CD4-positive, alpha-beta memory T cell (primary cell): ENCODE measurements at regions of chr2 and their contacts with region 1.

Region 1: DNA sequence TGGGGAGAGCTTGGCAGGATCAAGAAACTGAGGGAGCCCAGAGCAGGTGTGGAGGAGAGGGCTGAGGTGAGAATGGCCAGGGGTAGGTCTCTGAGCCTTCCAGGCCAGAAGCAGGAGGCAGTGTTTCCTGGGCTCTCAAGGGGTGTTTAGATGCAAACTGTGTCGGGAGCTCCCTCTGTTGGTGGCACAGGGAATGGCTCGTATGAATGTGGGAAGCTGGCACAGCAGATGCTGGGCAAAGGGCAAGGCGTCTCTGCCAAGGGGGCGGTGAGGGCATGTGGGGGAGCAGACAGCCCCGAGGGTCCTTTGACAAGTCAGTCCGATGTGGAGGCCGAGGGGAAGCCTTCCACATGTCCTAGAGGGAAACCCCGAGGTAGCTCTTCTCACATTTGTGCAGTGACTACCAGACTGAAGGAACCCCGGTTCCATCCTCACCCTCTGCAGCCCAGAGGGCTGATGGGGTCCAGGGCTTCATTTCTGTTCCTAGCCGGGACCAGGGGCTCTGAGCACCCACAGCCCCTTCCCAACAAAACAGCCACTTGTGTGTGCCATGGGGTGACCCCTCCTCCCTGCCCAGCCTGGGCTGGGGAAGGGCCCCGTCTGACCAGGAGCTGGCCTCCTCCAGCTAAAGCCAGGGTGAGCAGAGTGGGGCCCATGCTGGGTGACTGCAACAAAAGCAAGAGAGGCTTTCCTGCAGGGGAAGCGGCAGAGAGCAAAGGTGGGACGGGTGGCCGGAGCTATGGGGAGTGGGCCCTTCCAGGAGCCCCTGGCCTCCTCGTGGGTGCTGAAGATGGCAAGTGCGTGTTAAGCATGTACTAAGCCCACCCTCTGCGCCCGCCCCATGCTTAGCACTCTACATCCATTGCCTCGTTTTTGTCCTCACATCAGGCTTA is 103.4 kb downstream of the SEPTIN10 start:
- DNase-seq: peak; percentile 65 to 71 (median 68)
- H3K4me3 ChIP-seq: no peak overlapping the region
- H3K4me3 Mint-ChIP-seq: no peak overlapping the region
- H3K27ac ChIP-seq: no peak overlapping the region
- H3K27ac Mint-ChIP-seq: peak overlapping the region in 1 of 7 donors; percentile 44
- H3K4me1 ChIP-seq: no peaks in the 10 kb centered on the region
- H3K4me1 Mint-ChIP-seq: peaks cover 0 to 11% (median 5%) of the 10 kb centered on the region in 4 donors
- H3K27me3 ChIP-seq: no peaks in the 10 kb centered on the region
- H3K27me3 Mint-ChIP-seq: no peaks in the 10 kb centered on the region

Region 2: DNA sequence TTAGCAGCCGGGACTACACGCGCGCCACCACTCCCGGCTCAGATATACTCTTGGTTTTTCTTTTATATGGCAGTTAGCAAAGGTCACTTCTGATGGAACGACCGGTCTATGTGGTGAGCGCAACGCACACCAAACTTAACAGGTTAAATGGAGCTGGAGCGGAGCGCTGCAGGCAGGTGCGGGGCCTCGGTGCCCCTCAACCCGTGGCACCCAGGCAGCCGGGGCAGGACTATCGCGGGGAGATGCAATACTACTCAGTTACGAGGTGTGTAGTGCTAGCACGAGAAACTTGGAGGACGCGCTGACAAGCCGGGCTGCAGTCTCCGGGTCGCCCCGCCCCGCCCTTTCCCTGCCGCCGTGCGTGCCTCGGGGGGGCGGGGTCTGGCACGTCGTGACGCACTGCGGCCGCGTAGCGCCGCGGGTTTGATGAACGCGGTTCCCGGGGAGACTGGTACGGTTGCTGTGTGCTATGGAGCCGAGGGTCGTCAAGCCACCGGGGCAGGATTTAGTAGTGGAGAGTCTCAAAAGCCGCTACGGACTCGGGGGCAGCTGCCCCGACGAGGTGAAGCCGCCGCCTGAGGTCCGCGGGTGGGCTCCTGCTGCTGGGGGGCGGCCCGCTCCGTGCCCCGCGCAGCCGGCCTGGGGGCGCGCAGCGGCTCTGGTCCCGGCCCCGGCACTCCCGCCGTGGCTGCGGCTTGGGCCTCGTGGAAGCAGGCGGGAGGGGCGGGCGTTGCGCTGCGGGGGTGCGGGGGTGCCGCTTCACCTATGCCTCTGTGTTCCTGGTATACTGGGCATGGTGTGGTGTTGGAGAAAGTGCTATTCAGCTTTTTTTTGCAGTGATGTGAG is 723.8 kb before region 1 on chr2 and contains the start of gene CCDC138:
- CTCF ChIA-PET with region 1: no interaction called
- POLR2A ChIA-PET with region 1: no interaction called
- intact Hi-C with region 1: loop called (anchors 2 kb)
- DNase-seq: peak; percentile 89 to 91 (median 90)
- H3K4me3 ChIP-seq: peak within 1 kb of the TSS; percentile 37 to 78
- H3K4me3 Mint-ChIP-seq: peak within 1 kb of the TSS; percentile 93 to 100 (median 99)
- H3K27ac ChIP-seq: peak within 1 kb of the TSS; percentile 78
- H3K27ac Mint-ChIP-seq: peak within 1 kb of the TSS; percentile 80 to 99 (median 98)
- H3K4me1 ChIP-seq: peaks cover 15% of the 10 kb centered on the region
- H3K4me1 Mint-ChIP-seq: peaks cover 9 to 20% (median 11%) of the 10 kb centered on the region in 4 donors
- H3K27me3 ChIP-seq: no peaks in the 10 kb centered on the region
- H3K27me3 Mint-ChIP-seq: no peaks in the 10 kb centered on the region
- total RNA-seq, gene CCDC138: 4.2 to 4.9 TPM

Region 3: GRCh38 chr2:108927936-108928659 is 582.3 kb before region 1 on chr2:
- CTCF ChIA-PET with region 1: interaction called, 42 read pairs
- POLR2A ChIA-PET with region 1: no interaction called
- intact Hi-C with region 1: loop called (anchors 1 kb)
- DNase-seq: peak in 4 of 5 donors; percentile 41 to 52 (median 46)
- H3K4me3 ChIP-seq: no peak overlapping the region
- H3K4me3 Mint-ChIP-seq: no peak overlapping the region
- H3K27ac ChIP-seq: no peak overlapping the region
- H3K27ac Mint-ChIP-seq: peak overlapping the region in 1 of 7 donors; percentile 2
- H3K4me1 ChIP-seq: peaks cover 7% of the 10 kb centered on the region
- H3K4me1 Mint-ChIP-seq: peaks cover 4 to 14% (median 7%) of the 10 kb centered on the region in 4 donors
- H3K27me3 ChIP-seq: no peaks in the 10 kb centered on the region
- H3K27me3 Mint-ChIP-seq: no peaks in the 10 kb centered on the region

Region 4: DNA sequence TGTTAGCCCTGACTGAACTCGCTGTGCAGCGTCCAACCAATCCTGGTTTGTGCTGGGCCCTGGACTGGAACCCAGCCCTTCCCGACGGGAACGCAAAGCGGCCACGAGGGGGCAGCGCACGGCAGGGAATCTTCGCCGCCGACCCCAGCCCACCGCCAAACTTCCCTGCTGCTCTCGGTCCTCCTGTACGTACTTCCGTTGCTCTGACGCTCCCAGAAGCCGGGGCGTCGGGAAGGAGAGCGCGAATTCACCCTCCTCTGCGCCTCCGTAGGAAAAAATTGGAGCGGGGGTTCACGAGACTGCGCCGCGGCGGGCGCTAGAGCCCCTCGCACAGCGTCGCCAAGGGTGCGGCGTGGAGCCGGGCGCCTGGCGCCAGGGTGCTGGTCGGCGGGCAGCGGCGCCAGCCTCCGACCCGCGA is 382.3 kb before region 1 on chr2:
- CTCF ChIA-PET with region 1: interaction called, 38 read pairs
- POLR2A ChIA-PET with region 1: interaction called, 8 read pairs
- intact Hi-C with region 1: no loop called
- DNase-seq: peak; percentile 32 to 56 (median 54)
- H3K4me3 ChIP-seq: peak overlapping the region; percentile 11 to 63
- H3K4me3 Mint-ChIP-seq: peak overlapping the region; percentile 71 to 85 (median 80)
- H3K27ac ChIP-seq: no peak overlapping the region
- H3K27ac Mint-ChIP-seq: peak overlapping the region in 1 of 7 donors; percentile 12
- H3K4me1 ChIP-seq: peaks cover 15% of the 10 kb centered on the region
- H3K4me1 Mint-ChIP-seq: peaks cover 6 to 14% (median 10%) of the 10 kb centered on the region in 4 donors
- H3K27me3 ChIP-seq: peaks cover 5% of the 10 kb centered on the region
- H3K27me3 Mint-ChIP-seq: peaks cover 20 to 39% of the 10 kb centered on the region in 2 donors

Region 5: DNA sequence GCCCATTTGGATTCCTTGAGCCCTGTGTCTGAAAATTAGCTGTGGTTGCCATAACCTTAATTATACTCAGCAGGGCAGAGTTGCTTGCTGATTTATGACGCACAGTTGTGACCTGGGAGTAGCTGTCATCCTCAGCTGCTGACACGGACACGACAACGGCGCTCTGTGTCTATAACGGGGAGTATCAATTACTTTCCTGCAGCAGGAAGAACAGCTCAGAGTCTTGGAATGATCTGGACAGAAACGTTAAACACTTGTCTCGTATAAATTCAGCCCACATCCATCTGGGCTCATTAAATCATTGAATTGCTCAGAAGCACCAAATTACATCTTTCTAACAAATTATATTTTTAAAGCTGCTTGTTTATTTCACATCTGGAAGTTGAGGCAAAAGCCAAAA is 12.9 kb before region 1 on chr2:
- CTCF ChIA-PET with region 1: interaction called, 10 read pairs
- POLR2A ChIA-PET with region 1: interaction called, 3 read pairs
- intact Hi-C with region 1: no loop called
- DNase-seq: no peak
- H3K4me3 ChIP-seq: no peak overlapping the region
- H3K4me3 Mint-ChIP-seq: no peak overlapping the region
- H3K27ac ChIP-seq: no peak overlapping the region
- H3K27ac Mint-ChIP-seq: no peak overlapping the region
- H3K4me1 ChIP-seq: no peaks in the 10 kb centered on the region
- H3K4me1 Mint-ChIP-seq: no peaks in the 10 kb centered on the region
- H3K27me3 ChIP-seq: no peaks in the 10 kb centered on the region
- H3K27me3 Mint-ChIP-seq: no peaks in the 10 kb centered on the region